HepG2 (cell line): ENCODE measurements at regions of chr15 and their contacts with region 1.

Region 1: DNA sequence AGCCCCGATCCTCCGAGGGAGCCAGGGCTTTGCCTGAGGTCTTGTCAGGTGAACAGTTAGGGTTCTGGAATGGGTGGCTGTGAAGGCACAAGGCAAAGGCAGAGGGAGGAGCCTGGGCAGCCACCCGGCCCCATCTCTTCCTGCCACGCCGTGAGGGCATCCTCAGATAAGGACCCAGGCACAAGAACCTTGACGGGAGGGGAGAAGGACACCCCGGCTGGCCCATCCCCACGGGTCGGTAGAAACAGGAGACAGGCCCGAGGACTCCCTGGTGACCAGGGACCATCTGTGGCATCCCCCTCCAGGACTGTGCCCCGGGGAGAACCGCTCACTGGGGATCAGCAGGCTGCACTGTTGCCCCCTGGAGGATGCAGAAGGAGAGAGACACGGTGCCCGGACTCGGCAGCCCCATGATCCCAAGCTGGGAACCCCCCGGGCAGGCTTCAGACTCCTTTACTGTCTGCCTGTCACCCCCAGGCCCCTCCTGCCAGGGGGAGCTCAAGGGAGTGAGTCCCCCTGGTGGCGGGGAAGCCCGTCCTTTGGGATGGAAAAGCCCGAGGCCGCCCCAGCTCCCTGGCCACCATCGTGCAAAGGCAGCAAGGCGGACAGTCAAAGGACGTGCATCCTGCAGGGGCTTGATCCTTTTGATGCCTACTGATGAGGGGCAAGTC is 12.3 kb upstream of the PCSK6 start:
- DNase-seq: peak; percentile 66
- ATAC-seq: peak; percentile 88
- H3K4me3 ChIP-seq: peak overlapping the region; percentile 53 to 73 (median 62)
- H3K27ac ChIP-seq: no peak overlapping the region
- H3K4me1 ChIP-seq: peaks cover 71% of the 10 kb centered on the region
- H3K27me3 ChIP-seq: no peaks in the 10 kb centered on the region; a peak in 1 of 5 replicates
- CTCF ChIP-seq: peak; percentile 89
- EP300 ChIP-seq: no peak
- POLR2A ChIP-seq: no peak
- RAD21 ChIP-seq: peak; percentile 80

Region 2: GRCh38 chr15:101294731-101295606 is 206.9 kb before region 1 on chr15 and contains the start of gene SNRPA1:
- CTCF ChIA-PET with region 1: interaction called, 9 read pairs
- POLR2A ChIA-PET with region 1: no interaction called
- in situ Hi-C with region 1: loop called (anchors 10 kb)
- intact Hi-C with region 1: loop called (anchors 1 kb)
- DNase-seq: peak; percentile 84
- ATAC-seq: peak; percentile 85
- H3K4me3 ChIP-seq: peak within 1 kb of the TSS; percentile 66 to 90 (median 77)
- H3K27ac ChIP-seq: peak within 1 kb of the TSS; percentile 85
- H3K4me1 ChIP-seq: peaks cover 34% of the 10 kb centered on the region
- H3K27me3 ChIP-seq: no peaks in the 10 kb centered on the region; a peak in 1 of 5 replicates
- CTCF ChIP-seq: no peak
- EP300 ChIP-seq: peak in 1 of 2 experiments; percentile 59; a peak in 1 of 4 replicates
- POLR2A ChIP-seq: peak; percentile 79 to 81
- RAD21 ChIP-seq: no peak
- total RNA-seq, gene SNRPA1: 41.2 and 72.5 TPM in 2 replicates

Region 3: GRCh38 chr15:101489236-101489632 is 12.6 kb before region 1 on chr15:
- CTCF ChIA-PET with region 1: no interaction called
- POLR2A ChIA-PET with region 1: interaction called, 23 read pairs
- in situ Hi-C with region 1: no loop called
- intact Hi-C with region 1: no loop called
- DNase-seq: no peak
- ATAC-seq: peak; percentile 43
- H3K4me3 ChIP-seq: peak overlapping the region; percentile 62 to 83 (median 83); a peak in 4 of 6 replicates
- H3K27ac ChIP-seq: no peak overlapping the region
- H3K4me1 ChIP-seq: peaks cover 44% of the 10 kb centered on the region
- H3K27me3 ChIP-seq: no peaks in the 10 kb centered on the region
- CTCF ChIP-seq: peak; percentile 33; the same call in 1 of the 2 replicates
- EP300 ChIP-seq: no peak
- POLR2A ChIP-seq: no peak
- RAD21 ChIP-seq: peak; percentile 25

Region 4: DNA sequence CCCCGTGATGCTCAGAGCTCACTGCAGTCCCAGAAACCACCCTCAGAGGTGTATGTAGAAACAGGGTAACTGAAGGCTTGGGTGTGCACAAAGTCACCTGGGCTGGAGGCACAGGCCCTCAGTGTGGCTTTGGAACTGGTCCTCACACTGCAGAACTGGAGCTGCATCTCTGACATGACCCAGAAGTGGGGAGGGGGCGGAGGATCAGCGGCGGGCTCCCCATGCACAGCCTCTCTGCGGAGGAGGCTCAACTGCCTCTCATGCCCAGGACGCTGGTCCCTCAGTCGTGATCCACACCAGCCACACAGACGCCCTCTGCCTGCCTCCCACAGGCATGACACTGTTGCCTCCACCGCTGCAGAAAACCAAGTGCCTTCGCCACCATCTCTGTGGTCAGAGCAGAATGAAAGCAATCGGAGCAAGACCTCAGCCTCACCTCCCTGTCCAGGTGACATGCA is 76.6 kb after region 1 on chr15:
- CTCF ChIA-PET with region 1: no interaction called
- POLR2A ChIA-PET with region 1: no interaction called
- in situ Hi-C with region 1: no loop called
- intact Hi-C with region 1: loop called (anchors 5 kb)
- DNase-seq: peak; percentile 50
- ATAC-seq: peak; percentile 97
- H3K4me3 ChIP-seq: no peak overlapping the region
- H3K27ac ChIP-seq: no peak overlapping the region
- H3K4me1 ChIP-seq: peaks cover 17% of the 10 kb centered on the region; the same call in 1 of the 2 replicates
- H3K27me3 ChIP-seq: peaks cover 0 to 10% of the 10 kb centered on the region in 2 experiments
- CTCF ChIP-seq: peak; percentile 91
- EP300 ChIP-seq: no peak
- POLR2A ChIP-seq: no peak
- RAD21 ChIP-seq: peak; percentile 87

Region 5: DNA sequence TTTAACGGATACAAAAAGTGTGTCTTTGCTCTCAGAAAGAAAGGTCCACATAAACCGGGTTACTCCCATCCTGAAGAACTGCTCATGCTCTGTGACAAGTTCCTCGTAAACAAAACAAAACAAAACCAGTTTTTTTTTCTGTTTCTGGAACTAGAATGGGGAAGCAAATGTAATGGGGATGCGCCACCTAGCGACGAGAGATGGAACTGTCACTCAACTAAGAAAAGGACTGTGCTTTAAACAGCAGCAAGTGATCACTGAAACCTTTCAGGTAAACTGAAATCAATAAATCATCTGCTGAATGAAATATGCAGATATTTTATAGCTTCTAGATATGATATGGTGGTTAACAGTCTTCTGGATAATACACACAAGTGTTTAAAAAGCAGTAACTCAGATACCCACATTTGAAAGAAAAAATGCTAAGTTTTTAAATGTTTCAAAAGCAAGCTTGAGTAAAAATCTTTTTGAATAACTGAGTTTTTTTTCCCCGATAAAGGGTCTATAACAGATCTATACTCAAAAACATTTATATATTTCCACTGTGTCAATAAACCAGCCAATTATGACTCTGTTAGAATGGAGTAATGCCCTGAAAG is 139.4 kb after region 1 on chr15:
- CTCF ChIA-PET with region 1: interaction called, 4 read pairs
- POLR2A ChIA-PET with region 1: no interaction called
- in situ Hi-C with region 1: no loop called
- intact Hi-C with region 1: loop called (anchors 5 kb)
- DNase-seq: peak; percentile 52
- ATAC-seq: peak; percentile 59
- H3K4me3 ChIP-seq: no peak overlapping the region
- H3K27ac ChIP-seq: no peak overlapping the region
- H3K4me1 ChIP-seq: peaks cover 36% of the 10 kb centered on the region
- H3K27me3 ChIP-seq: no peaks in the 10 kb centered on the region
- CTCF ChIP-seq: peak; percentile 89
- EP300 ChIP-seq: no peak
- POLR2A ChIP-seq: no peak
- RAD21 ChIP-seq: peak; percentile 84